ENCODE measurements at regions of chr22 and their contacts with region 1.

Region 1: GRCh38 chr22:36331306-36331911 is 56.4 kb downstream of the MYH9 start:
- DNase-seq: peak; percentile 88
- ATAC-seq: peak; percentile 51
- H3K4me3 Mint-ChIP-seq: peak overlapping the region; percentile 77
- H3K27ac Mint-ChIP-seq: peak overlapping the region; percentile 99
- H3K4me1 Mint-ChIP-seq: peaks cover 95% of the 10 kb centered on the region
- H3K27me3 Mint-ChIP-seq: no peaks in the 10 kb centered on the region

Region 2: GRCh38 chr22:36123673-36124630 is 207.5 kb before region 1 on chr22:
- CTCF ChIA-PET with region 1: no interaction called
- POLR2A ChIA-PET with region 1: no interaction called
- intact Hi-C with region 1: no loop called
- DNase-seq: peak; percentile 97
- ATAC-seq: peak; percentile 99
- H3K4me3 Mint-ChIP-seq: peak overlapping the region; percentile 62
- H3K27ac Mint-ChIP-seq: peak overlapping the region; percentile 83
- H3K4me1 Mint-ChIP-seq: peaks cover 10% of the 10 kb centered on the region
- H3K27me3 Mint-ChIP-seq: no peaks in the 10 kb centered on the region

Region 3: GRCh38 chr22:36359181-36359996 is 28.0 kb after region 1 on chr22:
- CTCF ChIA-PET with region 1: interaction called, 11 read pairs
- POLR2A ChIA-PET with region 1: interaction called, 9 read pairs
- intact Hi-C with region 1: loop called (anchors 1 to 2 kb)
- DNase-seq: no peak
- ATAC-seq: no peak
- H3K4me3 Mint-ChIP-seq: peak overlapping the region; percentile 45
- H3K27ac Mint-ChIP-seq: peak overlapping the region; percentile 96
- H3K4me1 Mint-ChIP-seq: peaks cover 98% of the 10 kb centered on the region
- H3K27me3 Mint-ChIP-seq: no peaks in the 10 kb centered on the region

Region 4: GRCh38 chr22:36379593-36380361 is 48.4 kb after region 1 on chr22:
- CTCF ChIA-PET with region 1: interaction called, 18 read pairs
- POLR2A ChIA-PET with region 1: interaction called, 44 read pairs
- intact Hi-C with region 1: loop called in 1 of 2 experiments (anchors 2 kb)
- DNase-seq: peak; percentile 62
- ATAC-seq: peak; percentile 13
- H3K4me3 Mint-ChIP-seq: peak overlapping the region; percentile 75
- H3K27ac Mint-ChIP-seq: peak overlapping the region; percentile 99
- H3K4me1 Mint-ChIP-seq: peaks cover 92% of the 10 kb centered on the region
- H3K27me3 Mint-ChIP-seq: no peaks in the 10 kb centered on the region

Region 5: DNA sequence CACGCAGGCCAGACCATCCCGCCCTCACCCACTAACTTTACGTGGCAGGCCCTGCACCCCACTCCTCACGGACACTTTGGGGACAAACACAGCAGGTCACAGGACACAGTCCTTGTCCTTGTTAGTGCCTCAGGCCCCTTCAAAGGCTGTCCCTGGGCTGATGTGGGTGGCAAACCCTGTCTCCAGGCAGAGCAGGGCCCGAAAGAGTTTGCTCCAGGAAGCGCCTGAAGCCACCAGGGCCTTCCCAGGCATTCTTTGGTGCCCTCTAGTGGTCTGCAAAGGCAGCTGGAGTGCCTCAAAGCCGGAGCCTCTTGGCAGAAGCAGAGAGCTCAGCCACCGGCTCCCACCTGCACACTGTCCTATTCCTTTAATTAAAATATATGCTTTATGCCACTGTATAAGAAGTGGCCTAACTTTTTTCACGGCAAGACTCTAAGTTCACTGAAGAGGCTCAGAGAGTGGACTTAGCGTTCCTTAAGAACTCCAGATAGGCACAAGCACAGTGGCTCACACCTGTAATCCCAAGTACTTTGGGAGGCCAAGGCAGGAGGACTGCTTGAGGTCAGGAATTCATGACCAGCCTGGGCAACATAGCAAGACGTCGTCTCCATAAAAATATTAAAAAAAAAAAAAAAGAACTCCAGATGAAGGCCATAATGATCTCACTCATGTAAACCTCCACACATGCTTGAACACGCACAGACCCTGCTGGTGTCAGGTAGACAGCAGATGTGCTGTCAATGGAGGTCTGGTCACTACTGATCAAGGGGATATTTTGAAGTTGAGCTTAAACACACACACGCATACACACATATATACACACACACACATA is 139.0 kb after region 1 on chr22:
- CTCF ChIA-PET with region 1: interaction called, 16 read pairs
- POLR2A ChIA-PET with region 1: interaction called, 4 read pairs
- intact Hi-C with region 1: loop called in 1 of 2 experiments (anchors 2 kb)
- DNase-seq: peak; percentile 89
- ATAC-seq: peak; percentile 94
- H3K4me3 Mint-ChIP-seq: no peak overlapping the region
- H3K27ac Mint-ChIP-seq: peak overlapping the region; percentile 72
- H3K4me1 Mint-ChIP-seq: peaks cover 29% of the 10 kb centered on the region
- H3K27me3 Mint-ChIP-seq: no peaks in the 10 kb centered on the region